Gastrocnemius medialis (tissue), 4 donors: ENCODE measurements at regions of chr15 and their contacts with region 1.

Region 1: DNA sequence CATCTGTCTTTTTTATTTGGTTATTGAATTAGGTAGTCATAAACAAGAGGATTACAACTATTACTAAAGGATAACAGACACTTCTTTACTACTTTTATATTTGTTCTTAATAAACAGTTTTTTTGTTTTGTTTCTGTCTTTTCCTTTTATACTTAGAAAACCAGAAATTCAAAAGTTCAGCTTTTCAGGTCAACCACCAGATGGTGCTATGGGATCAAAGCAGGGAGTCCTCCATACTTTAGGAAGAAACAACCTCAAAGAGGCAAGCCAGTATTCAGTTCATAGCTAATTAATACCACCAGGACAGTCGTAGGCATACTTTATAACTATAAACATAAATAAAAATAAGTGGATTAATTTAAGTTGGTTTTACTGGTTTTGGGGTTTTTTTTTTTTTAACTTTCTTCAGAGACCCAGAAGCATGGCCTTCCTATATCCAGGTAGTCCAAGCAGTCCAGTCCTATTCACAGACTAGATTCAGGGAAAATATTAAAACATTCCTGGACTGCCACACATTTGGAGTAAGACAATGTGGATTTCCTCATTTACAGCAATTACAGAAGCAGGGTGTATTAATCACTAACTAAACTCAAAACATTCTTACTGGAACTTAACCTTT is 16.0 kb upstream of the EID1 start:
- DNase-seq: no peak
- ATAC-seq: peak in 1 of 2 donors; percentile 70
- H3K4me3 ChIP-seq: no peak overlapping the region
- H3K27ac ChIP-seq: no peak overlapping the region
- H3K4me1 ChIP-seq: no peaks in the 10 kb centered on the region
- H3K27me3 ChIP-seq: no peaks in the 10 kb centered on the region
- CTCF ChIP-seq: peak; percentile 69 to 90 (median 77)
- POLR2A ChIP-seq: no peak

Region 2: GRCh38 chr15:48800811-48801455 is 61.0 kb before region 1 on chr15:
- in situ Hi-C with region 1: no loop called
- intact Hi-C with region 1: no loop called
- DNase-seq: no peak
- ATAC-seq: peak in 1 of 2 donors; percentile 33
- H3K4me3 ChIP-seq: no peak overlapping the region
- H3K27ac ChIP-seq: no peak overlapping the region
- H3K4me1 ChIP-seq: no peaks in the 10 kb centered on the region
- H3K27me3 ChIP-seq: no peaks in the 10 kb centered on the region
- CTCF ChIP-seq: peak in 2 of 5 experiments; percentile 23 to 36
- POLR2A ChIP-seq: no peak

Region 3: DNA sequence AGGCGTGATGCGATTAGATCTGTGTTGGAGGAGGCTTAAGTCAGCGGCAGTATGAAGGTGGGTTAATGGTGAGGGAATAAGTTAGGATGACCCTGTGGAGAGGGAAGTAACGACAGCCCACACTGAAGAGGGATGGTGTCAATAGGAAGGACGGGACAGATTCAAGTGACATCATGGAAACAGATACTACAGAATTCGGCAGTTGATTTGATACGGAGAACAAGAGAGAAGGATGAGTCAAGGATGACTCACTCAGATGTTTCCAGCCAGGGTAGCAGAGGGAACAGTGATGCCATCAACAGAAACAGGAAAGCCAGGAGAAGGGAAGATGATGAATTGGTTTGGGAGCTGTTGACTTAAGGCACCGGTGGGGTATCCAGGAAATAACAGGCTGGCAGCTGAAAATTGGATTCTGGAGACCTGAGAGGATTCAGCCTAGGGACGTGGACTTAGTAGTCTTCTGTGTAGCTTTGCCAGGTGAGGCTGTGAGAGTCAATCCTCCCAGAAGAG is 63.8 kb after region 1 on chr15:
- in situ Hi-C with region 1: no loop called
- intact Hi-C with region 1: no loop called
- DNase-seq: no peak
- ATAC-seq: peak; percentile 64
- H3K4me3 ChIP-seq: no peak overlapping the region
- H3K27ac ChIP-seq: no peak overlapping the region
- H3K4me1 ChIP-seq: no peaks in the 10 kb centered on the region
- H3K27me3 ChIP-seq: no peaks in the 10 kb centered on the region
- CTCF ChIP-seq: no peak
- POLR2A ChIP-seq: no peak

Region 4: GRCh38 chr15:48963524-48964113 is 101.7 kb after region 1 on chr15 and contains the start of gene SHC4:
- in situ Hi-C with region 1: loop called in 1 of 4 experiments (anchors 10 kb)
- intact Hi-C with region 1: loop called (anchors 2 kb)
- DNase-seq: peak; percentile 22 to 53
- ATAC-seq: peak; percentile 81 to 84
- H3K4me3 ChIP-seq: peak within 1 kb of the TSS; percentile 53 to 65 (median 60)
- H3K27ac ChIP-seq: peak within 1 kb of the TSS in 3 of 4 donors; percentile 47 to 64 (median 58)
- H3K4me1 ChIP-seq: peaks cover 4 to 24% of the 10 kb centered on the region in 2 donors
- H3K27me3 ChIP-seq: no peaks in the 10 kb centered on the region
- CTCF ChIP-seq: no peak
- POLR2A ChIP-seq: no peak
- total RNA-seq, gene SHC4: 0.29 to 0.39 TPM in 2 of 4 donors, not detected in the others

Region 5: DNA sequence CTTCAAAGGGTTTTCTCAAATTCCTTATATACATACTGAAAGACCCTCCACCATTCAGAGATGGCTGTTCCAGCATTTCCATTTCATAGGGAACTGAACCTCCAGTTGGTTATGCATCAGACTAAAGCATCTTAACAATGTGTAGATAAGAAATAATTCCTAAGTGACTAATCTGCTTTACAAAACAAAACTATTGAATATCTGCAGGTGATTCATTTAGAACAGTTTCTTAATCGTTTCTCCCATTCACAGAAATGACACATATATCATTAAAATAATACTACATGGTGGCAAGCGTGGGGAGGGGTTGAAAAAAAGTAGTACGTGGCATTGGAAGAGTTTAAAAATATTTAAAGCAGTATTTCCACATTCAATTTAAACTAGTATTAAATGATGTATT is 274.0 kb after region 1 on chr15:
- in situ Hi-C with region 1: loop called in 1 of 4 experiments (anchors 10 kb)
- intact Hi-C with region 1: no loop called
- DNase-seq: no peak
- ATAC-seq: no peak
- H3K4me3 ChIP-seq: no peak overlapping the region
- H3K27ac ChIP-seq: no peak overlapping the region
- H3K4me1 ChIP-seq: no peaks in the 10 kb centered on the region
- H3K27me3 ChIP-seq: no peaks in the 10 kb centered on the region
- CTCF ChIP-seq: no peak
- POLR2A ChIP-seq: no peak

Region 6: DNA sequence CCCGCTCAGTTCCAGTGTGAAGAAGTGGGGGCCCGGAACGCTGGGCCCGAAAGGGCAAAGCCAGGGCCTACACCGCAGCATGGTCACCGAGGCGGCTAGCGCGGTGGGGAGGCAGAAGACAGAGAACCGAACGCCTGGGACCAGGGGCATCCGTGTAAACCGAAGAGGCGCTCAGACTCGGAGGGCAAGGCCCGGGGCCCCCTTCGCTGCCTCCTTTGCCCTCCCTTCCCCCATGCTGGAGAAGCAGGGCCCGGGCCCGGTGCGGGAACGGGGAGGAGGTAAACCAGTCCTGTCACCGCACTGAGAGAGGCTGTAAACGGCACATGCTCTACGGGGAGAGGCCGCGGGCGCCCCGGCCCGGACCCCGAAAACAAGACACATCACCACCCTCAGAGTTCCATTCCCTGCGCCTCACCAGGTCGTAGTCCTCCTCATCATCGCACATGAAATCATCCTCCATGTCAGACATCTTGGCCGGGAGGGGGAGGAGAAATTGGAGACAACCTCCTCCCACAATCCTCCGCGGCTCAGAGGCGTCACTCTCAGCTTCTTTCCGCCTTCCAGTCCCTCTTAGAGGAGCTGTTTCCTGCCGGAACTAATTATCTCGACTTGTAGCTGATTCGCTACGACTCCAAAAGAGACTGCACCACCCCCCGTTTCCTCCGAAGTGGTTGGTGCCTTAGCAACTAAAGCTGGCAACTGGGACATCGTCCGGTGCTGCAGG is 293.4 kb after region 1 on chr15 and contains the start of gene COPS2:
- in situ Hi-C with region 1: loop called in 2 of 4 experiments (anchors 5 to 25 kb)
- intact Hi-C with region 1: no loop called
- DNase-seq: peak; percentile 93 to 95
- ATAC-seq: peak; percentile 99 to 100
- H3K4me3 ChIP-seq: peak within 1 kb of the TSS; percentile 73 to 99 (median 84)
- H3K27ac ChIP-seq: peak within 1 kb of the TSS; percentile 85 to 96 (median 90)
- H3K4me1 ChIP-seq: peaks cover 36 to 45% of the 10 kb centered on the region in 2 donors
- H3K27me3 ChIP-seq: no peaks in the 10 kb centered on the region
- CTCF ChIP-seq: no peak
- POLR2A ChIP-seq: peak; percentile 45 to 66
- total RNA-seq, gene COPS2: 69.5 to 98.2 (median 93.2) TPM

Region 7: GRCh38 chr15:50145451-50145872 is 1283.5 kb after region 1 on chr15:
- in situ Hi-C with region 1: loop called (anchors 5 to 25 kb)
- intact Hi-C with region 1: loop called (anchors 1 kb)
- DNase-seq: no peak
- ATAC-seq: peak; percentile 65 to 76
- H3K4me3 ChIP-seq: no peak overlapping the region
- H3K27ac ChIP-seq: no peak overlapping the region
- H3K4me1 ChIP-seq: no peaks in the 10 kb centered on the region
- H3K27me3 ChIP-seq: no peaks in the 10 kb centered on the region
- CTCF ChIP-seq: peak; percentile 30 to 62 (median 60)
- POLR2A ChIP-seq: no peak